ENCODE measurements at regions of chr9 and their contacts with region 1.

Region 1: GRCh38 chr9:97982683-97983588 is at the start of gene ANP32B:
- DNase-seq: peak; percentile 87 to 97 (median 94)
- ATAC-seq: peak; percentile 83
- H3K4me3 ChIP-seq: peak within 1 kb of the TSS; percentile 75 to 92
- H3K4me3 Mint-ChIP-seq: peak within 1 kb of the TSS; percentile 92
- H3K27ac ChIP-seq: peak within 1 kb of the TSS; percentile 75 to 85
- H3K27ac Mint-ChIP-seq: peak within 1 kb of the TSS; percentile 93
- H3K4me1 ChIP-seq: peaks cover 53% of the 10 kb centered on the region
- H3K4me1 Mint-ChIP-seq: peaks cover 64% of the 10 kb centered on the region
- H3K27me3 ChIP-seq: no peaks in the 10 kb centered on the region
- H3K27me3 Mint-ChIP-seq: no peaks in the 10 kb centered on the region
- CTCF ChIP-seq: peak; percentile 94
- total RNA-seq, gene ANP32B: 168 to 177 TPM

Region 2: GRCh38 chr9:97930972-97931371 is 52.0 kb before region 1 on chr9:
- CTCF ChIA-PET with region 1: interaction called, 6 read pairs
- POLR2A ChIA-PET with region 1: interaction called, 13 read pairs
- intact Hi-C with region 1: loop called in 1 of 2 experiments (anchors 5 kb)
- DNase-seq: peak in 1 of 9 experiments; percentile 49
- ATAC-seq: peak; percentile 59
- H3K4me3 ChIP-seq: peak overlapping the region in 1 of 2 experiments; percentile 3
- H3K4me3 Mint-ChIP-seq: peak overlapping the region; percentile 69
- H3K27ac ChIP-seq: peak overlapping the region in 1 of 2 experiments; percentile 55
- H3K27ac Mint-ChIP-seq: peak overlapping the region; percentile 93
- H3K4me1 ChIP-seq: peaks cover 57% of the 10 kb centered on the region
- H3K4me1 Mint-ChIP-seq: peaks cover 62% of the 10 kb centered on the region
- H3K27me3 ChIP-seq: no peaks in the 10 kb centered on the region
- H3K27me3 Mint-ChIP-seq: no peaks in the 10 kb centered on the region
- CTCF ChIP-seq: no peak

Region 3: GRCh38 chr9:97966493-97966892 is 16.4 kb before region 1 on chr9:
- CTCF ChIA-PET with region 1: interaction called, 10 read pairs
- POLR2A ChIA-PET with region 1: interaction called, 19 read pairs
- intact Hi-C with region 1: loop called in 1 of 2 experiments (anchors 1 kb)
- DNase-seq: no peak
- ATAC-seq: no peak
- H3K4me3 ChIP-seq: no peak overlapping the region
- H3K4me3 Mint-ChIP-seq: no peak overlapping the region
- H3K27ac ChIP-seq: no peak overlapping the region
- H3K27ac Mint-ChIP-seq: no peak overlapping the region
- H3K4me1 ChIP-seq: peaks cover 12% of the 10 kb centered on the region
- H3K4me1 Mint-ChIP-seq: peaks cover 16% of the 10 kb centered on the region
- H3K27me3 ChIP-seq: no peaks in the 10 kb centered on the region
- H3K27me3 Mint-ChIP-seq: no peaks in the 10 kb centered on the region
- CTCF ChIP-seq: no peak

Region 4: DNA sequence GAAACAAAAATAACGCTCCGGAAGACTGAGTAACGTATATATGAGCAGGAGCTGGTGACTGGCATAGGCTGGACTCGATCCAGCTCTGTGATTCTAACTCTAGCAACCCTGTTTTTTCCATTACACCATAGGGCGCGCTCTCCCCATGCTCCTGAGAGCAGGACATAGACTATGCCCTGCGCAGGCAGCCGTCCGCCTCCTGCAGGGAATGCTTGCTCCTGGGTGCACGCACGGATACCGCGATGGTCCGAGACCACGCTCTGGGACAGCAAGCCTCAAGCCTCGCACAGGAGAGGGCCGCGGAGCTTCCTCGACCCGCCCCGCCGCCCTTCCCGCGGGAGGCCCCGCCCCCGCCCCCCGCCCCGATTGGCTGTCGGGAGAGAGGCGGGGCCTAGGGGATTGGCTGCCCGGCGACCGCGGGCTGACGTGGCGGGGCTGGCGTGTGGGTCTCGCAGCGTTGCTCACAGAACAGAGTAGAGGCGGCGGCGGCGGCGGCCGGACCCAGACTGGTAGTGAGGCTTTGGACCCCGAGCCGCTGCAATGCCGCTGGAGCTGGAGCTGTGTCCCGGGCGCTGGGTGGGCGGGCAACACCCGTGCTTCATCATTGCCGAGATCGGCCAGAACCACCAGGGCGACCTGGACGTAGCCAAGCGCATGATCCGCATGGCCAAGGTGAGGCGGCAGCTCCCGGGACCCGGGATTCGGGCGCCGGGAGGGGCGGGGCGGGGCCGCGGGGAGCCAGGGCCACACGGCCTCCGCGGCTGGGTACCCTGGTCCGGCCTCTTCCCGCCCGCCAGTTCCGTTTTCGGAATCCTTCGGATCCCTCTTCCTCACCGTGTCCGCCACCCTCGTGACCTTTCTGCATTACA is 73.6 kb after region 1 on chr9 and contains the start of gene NANS:
- CTCF ChIA-PET with region 1: interaction called, 3 read pairs
- POLR2A ChIA-PET with region 1: interaction called, 13 read pairs
- intact Hi-C with region 1: loop called (anchors 2 to 5 kb)
- DNase-seq: peak; percentile 78 to 93 (median 93)
- ATAC-seq: peak; percentile 94
- H3K4me3 ChIP-seq: peak within 1 kb of the TSS; percentile 58 to 83
- H3K4me3 Mint-ChIP-seq: peak within 1 kb of the TSS; percentile 96
- H3K27ac ChIP-seq: peak within 1 kb of the TSS; percentile 81 to 83
- H3K27ac Mint-ChIP-seq: peak within 1 kb of the TSS; percentile 97
- H3K4me1 ChIP-seq: peaks cover 21% of the 10 kb centered on the region
- H3K4me1 Mint-ChIP-seq: peaks cover 24% of the 10 kb centered on the region
- H3K27me3 ChIP-seq: no peaks in the 10 kb centered on the region
- H3K27me3 Mint-ChIP-seq: no peaks in the 10 kb centered on the region
- CTCF ChIP-seq: no peak
- total RNA-seq, gene NANS: 84.6 to 92.5 TPM

Region 5: GRCh38 chr9:98796364-98797101 is 813.6 kb after region 1 on chr9 and contains the start of gene ANKS6:
- CTCF ChIA-PET with region 1: no interaction called
- POLR2A ChIA-PET with region 1: no interaction called
- intact Hi-C with region 1: loop called in 1 of 2 experiments (anchors 5 kb)
- DNase-seq: peak; percentile 63 to 91 (median 85)
- ATAC-seq: peak; percentile 92
- H3K4me3 ChIP-seq: peak within 1 kb of the TSS; percentile 77 to 95
- H3K4me3 Mint-ChIP-seq: peak within 1 kb of the TSS; percentile 88
- H3K27ac ChIP-seq: peak within 1 kb of the TSS; percentile 61 to 66
- H3K27ac Mint-ChIP-seq: peak within 1 kb of the TSS; percentile 85
- H3K4me1 ChIP-seq: peaks cover 15% of the 10 kb centered on the region
- H3K4me1 Mint-ChIP-seq: peaks cover 32% of the 10 kb centered on the region
- H3K27me3 ChIP-seq: no peaks in the 10 kb centered on the region
- H3K27me3 Mint-ChIP-seq: no peaks in the 10 kb centered on the region
- CTCF ChIP-seq: peak; percentile 28
- total RNA-seq, gene ANKS6: 10.6 to 12.7 TPM

Measured in CD8-positive, alpha-beta T cell (primary cell).